ENCODE measurements at regions of chr21 and their contacts with region 1.

Region 1: GRCh38 chr21:39137248-39138178 is 45.7 kb downstream of the PSMG1 start:
- DNase-seq: peak; percentile 56
- H3K4me3 ChIP-seq: no peak overlapping the region
- H3K27ac ChIP-seq: peak overlapping the region in 1 of 2 experiments; percentile 71; a peak in 2 of 4 replicates
- H3K4me1 ChIP-seq: peaks cover 3 to 30% of the 10 kb centered on the region in 2 experiments; a peak in 1 of 4 replicates
- H3K27me3 ChIP-seq: no peaks in the 10 kb centered on the region
- CTCF ChIP-seq: no peak
- EP300 ChIP-seq: peak in 1 of 2 experiments; percentile 54; a peak in 1 of 4 replicates
- RAD21 ChIP-seq: peak; percentile 30; the same call in 1 of the 2 replicates

Region 2: GRCh38 chr21:38503583-38503982 is 633.9 kb before region 1 on chr21:
- CTCF ChIA-PET with region 1: interaction called, 11 read pairs
- POLR2A ChIA-PET with region 1: no interaction called
- DNase-seq: peak; percentile 39
- H3K4me3 ChIP-seq: peak overlapping the region in 1 of 2 experiments; percentile 44; a peak in 3 of 4 replicates
- H3K27ac ChIP-seq: peak overlapping the region in 1 of 2 experiments; percentile 77; a peak in 3 of 4 replicates
- H3K4me1 ChIP-seq: peaks cover 7% of the 10 kb centered on the region in 2 experiments; a peak in 2 of 4 replicates
- H3K27me3 ChIP-seq: no peaks in the 10 kb centered on the region
- CTCF ChIP-seq: no peak
- EP300 ChIP-seq: peak in 1 of 2 experiments; percentile 80; a peak in 2 of 4 replicates
- RAD21 ChIP-seq: no peak

Region 3: GRCh38 chr21:38721971-38722370 is 415.5 kb before region 1 on chr21:
- CTCF ChIA-PET with region 1: interaction called, 18 read pairs
- POLR2A ChIA-PET with region 1: no interaction called
- DNase-seq: no peak
- H3K4me3 ChIP-seq: no peak overlapping the region
- H3K27ac ChIP-seq: no peak overlapping the region
- H3K4me1 ChIP-seq: no peaks in the 10 kb centered on the region; a peak in 1 of 4 replicates
- H3K27me3 ChIP-seq: no peaks in the 10 kb centered on the region
- CTCF ChIP-seq: no peak
- EP300 ChIP-seq: no peak
- RAD21 ChIP-seq: no peak

Region 4: GRCh38 chr21:38798481-38798882 is 339.0 kb before region 1 on chr21:
- CTCF ChIA-PET with region 1: interaction called, 24 read pairs
- POLR2A ChIA-PET with region 1: no interaction called
- DNase-seq: peak; percentile 40
- H3K4me3 ChIP-seq: no peak overlapping the region
- H3K27ac ChIP-seq: peak overlapping the region; percentile 53 to 91; a peak in 3 of 4 replicates
- H3K4me1 ChIP-seq: peaks cover 16 to 45% of the 10 kb centered on the region in 2 experiments
- H3K27me3 ChIP-seq: no peaks in the 10 kb centered on the region
- CTCF ChIP-seq: no peak
- EP300 ChIP-seq: no peak
- RAD21 ChIP-seq: no peak

Region 5: DNA sequence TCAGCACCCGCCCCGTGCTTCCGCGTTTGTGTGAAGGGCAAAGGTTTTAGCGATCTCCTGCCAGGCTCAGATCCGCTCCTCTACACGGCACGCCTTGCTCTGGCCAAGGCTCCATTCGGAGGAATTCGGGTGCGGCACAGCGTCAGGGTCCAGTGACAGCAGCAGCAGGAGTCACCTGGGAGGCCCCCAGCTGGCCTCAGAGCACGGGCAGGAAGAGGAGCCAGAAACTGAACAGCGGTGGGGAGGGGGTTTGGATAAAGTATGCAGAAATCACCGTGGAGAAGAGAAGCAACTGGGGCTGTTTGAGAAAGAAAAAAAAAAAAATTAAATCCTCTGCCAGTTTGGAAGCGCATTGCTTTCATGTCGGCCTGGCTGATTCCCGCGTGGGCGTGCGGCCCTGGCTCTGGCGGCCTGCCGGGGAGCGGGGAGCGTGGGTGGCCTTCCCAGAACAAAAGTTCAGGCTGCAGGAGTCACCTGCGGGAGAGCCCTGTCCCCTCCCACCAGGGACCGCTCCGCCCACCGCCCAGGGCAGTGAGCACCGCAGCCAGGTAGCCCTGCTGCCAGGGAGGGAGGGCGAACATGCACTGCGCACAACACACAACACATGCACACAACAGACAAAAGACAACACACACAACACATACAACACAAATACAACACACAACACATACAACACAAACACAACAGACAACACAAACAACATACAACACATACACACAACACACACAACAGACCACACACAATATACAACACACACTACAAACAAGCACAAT is 224.2 kb before region 1 on chr21:
- CTCF ChIA-PET with region 1: no interaction called
- POLR2A ChIA-PET with region 1: no interaction called
- DNase-seq: peak; percentile 61
- H3K4me3 ChIP-seq: no peak overlapping the region
- H3K27ac ChIP-seq: no peak overlapping the region
- H3K4me1 ChIP-seq: peaks cover 0 to 14% of the 10 kb centered on the region in 2 experiments; a peak in 1 of 4 replicates
- H3K27me3 ChIP-seq: no peaks in the 10 kb centered on the region
- CTCF ChIP-seq: no peak
- EP300 ChIP-seq: no peak
- RAD21 ChIP-seq: no peak

Region 6: GRCh38 chr21:38985568-38986378 is 151.7 kb before region 1 on chr21:
- CTCF ChIA-PET with region 1: interaction called, 17 read pairs
- POLR2A ChIA-PET with region 1: no interaction called
- DNase-seq: peak; percentile 84
- H3K4me3 ChIP-seq: peak overlapping the region; percentile 10 to 16; a peak in 3 of 4 replicates
- H3K27ac ChIP-seq: peak overlapping the region; percentile 79 to 99
- H3K4me1 ChIP-seq: peaks cover 28 to 70% of the 10 kb centered on the region in 2 experiments
- H3K27me3 ChIP-seq: no peaks in the 10 kb centered on the region
- CTCF ChIP-seq: no peak
- EP300 ChIP-seq: peak in 1 of 2 experiments; percentile 96; a peak in 2 of 4 replicates
- RAD21 ChIP-seq: peak; percentile 10

Region 7: GRCh38 chr21:39148975-39149374 is 11.5 kb after region 1 on chr21:
- CTCF ChIA-PET with region 1: interaction called, 13 read pairs
- POLR2A ChIA-PET with region 1: no interaction called
- DNase-seq: no peak
- H3K4me3 ChIP-seq: no peak overlapping the region
- H3K27ac ChIP-seq: no peak overlapping the region
- H3K4me1 ChIP-seq: no peaks in the 10 kb centered on the region
- H3K27me3 ChIP-seq: no peaks in the 10 kb centered on the region
- CTCF ChIP-seq: no peak
- EP300 ChIP-seq: no peak
- RAD21 ChIP-seq: no peak

Region 8: GRCh38 chr21:39183237-39184007 is 45.9 kb after region 1 on chr21 and contains the start of gene PSMG1:
- CTCF ChIA-PET with region 1: interaction called, 28 read pairs
- POLR2A ChIA-PET with region 1: no interaction called
- DNase-seq: peak; percentile 94
- H3K4me3 ChIP-seq: peak within 1 kb of the TSS; percentile 75 to 93
- H3K27ac ChIP-seq: peak within 1 kb of the TSS; percentile 76 to 87
- H3K4me1 ChIP-seq: peaks cover 0 to 11% of the 10 kb centered on the region in 2 experiments; a peak in 3 of 4 replicates
- H3K27me3 ChIP-seq: no peaks in the 10 kb centered on the region
- CTCF ChIP-seq: no peak
- EP300 ChIP-seq: no peak
- RAD21 ChIP-seq: no peak
- polyA plus RNA-seq, gene PSMG1: 39.2 and 39.6 TPM in 2 replicates

Region 9: GRCh38 chr21:39397646-39398385 is 260.3 kb after region 1 on chr21:
- CTCF ChIA-PET with region 1: no interaction called
- POLR2A ChIA-PET with region 1: no interaction called
- DNase-seq: no peak
- H3K4me3 ChIP-seq: no peak overlapping the region
- H3K27ac ChIP-seq: no peak overlapping the region
- H3K4me1 ChIP-seq: no peaks in the 10 kb centered on the region; a peak in 1 of 4 replicates
- H3K27me3 ChIP-seq: no peaks in the 10 kb centered on the region
- CTCF ChIP-seq: no peak
- EP300 ChIP-seq: no peak
- RAD21 ChIP-seq: no peak

Region 10: GRCh38 chr21:39511131-39511530 is 373.6 kb after region 1 on chr21:
- CTCF ChIA-PET with region 1: no interaction called
- POLR2A ChIA-PET with region 1: no interaction called
- DNase-seq: no peak
- H3K4me3 ChIP-seq: no peak overlapping the region
- H3K27ac ChIP-seq: no peak overlapping the region
- H3K4me1 ChIP-seq: no peaks in the 10 kb centered on the region
- H3K27me3 ChIP-seq: no peaks in the 10 kb centered on the region
- CTCF ChIP-seq: no peak
- EP300 ChIP-seq: no peak
- RAD21 ChIP-seq: no peak

Region 11: GRCh38 chr21:41043014-41043413 is 1905.5 kb after region 1 on chr21:
- CTCF ChIA-PET with region 1: no interaction called
- POLR2A ChIA-PET with region 1: no interaction called
- DNase-seq: no peak
- H3K4me3 ChIP-seq: no peak overlapping the region
- H3K27ac ChIP-seq: no peak overlapping the region
- H3K4me1 ChIP-seq: peaks cover 0 to 3% of the 10 kb centered on the region in 2 experiments; a peak in 1 of 4 replicates
- H3K27me3 ChIP-seq: no peaks in the 10 kb centered on the region
- CTCF ChIP-seq: no peak
- EP300 ChIP-seq: no peak
- RAD21 ChIP-seq: peak; percentile 39

Measured in SK-N-SH (cell line).